PC-3 (cell line): ENCODE measurements at regions of chr13 and their contacts with region 1.

Region 1: GRCh38 chr13:80979035-80979641 is 638.2 kb upstream of the SPRY2 start:
- DNase-seq: peak; percentile 67
- ATAC-seq: peak; percentile 68
- H3K4me3 ChIP-seq: no peak overlapping the region
- H3K27ac ChIP-seq: no peak overlapping the region
- H3K4me1 ChIP-seq: no peaks in the 10 kb centered on the region
- H3K27me3 ChIP-seq: no peaks in the 10 kb centered on the region
- CTCF ChIP-seq: peak; percentile 84

Region 2: DNA sequence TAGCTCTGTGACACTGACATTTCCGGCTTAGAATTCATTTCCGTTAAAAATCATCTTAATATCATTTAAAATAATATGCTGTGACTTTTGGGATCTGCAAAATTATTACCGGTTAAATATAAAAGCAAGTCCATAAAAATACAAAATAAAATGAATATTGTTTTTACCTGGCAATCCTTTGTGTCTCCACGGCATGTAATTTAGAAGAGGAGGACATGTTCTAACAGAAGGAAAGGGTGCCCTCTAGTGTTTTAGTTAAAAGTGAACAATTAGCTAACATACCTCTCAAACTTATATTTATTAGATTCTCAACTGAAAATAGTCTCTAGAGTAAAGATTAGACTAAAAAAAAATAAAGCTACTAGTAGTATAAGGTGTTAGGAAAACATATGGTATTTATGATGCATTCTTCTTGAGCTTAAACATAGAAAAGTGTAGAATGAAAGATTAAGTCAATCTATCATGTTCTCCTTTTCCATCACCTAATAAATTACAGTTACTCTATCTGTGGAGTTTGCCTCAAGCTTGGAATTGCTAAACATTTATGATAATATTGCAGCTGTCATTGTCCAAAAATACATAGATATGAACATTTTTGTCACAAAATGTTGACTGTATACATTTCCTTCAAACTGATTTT is 38.5 kb after region 1 on chr13:
- CTCF ChIA-PET with region 1: interaction called, 4 read pairs
- POLR2A ChIA-PET with region 1: no interaction called
- intact Hi-C with region 1: loop called (anchors 1 kb)
- DNase-seq: peak; percentile 61
- ATAC-seq: peak; percentile 55
- H3K4me3 ChIP-seq: no peak overlapping the region
- H3K27ac ChIP-seq: no peak overlapping the region
- H3K4me1 ChIP-seq: no peaks in the 10 kb centered on the region
- H3K27me3 ChIP-seq: no peaks in the 10 kb centered on the region
- CTCF ChIP-seq: peak; percentile 67

Region 3: DNA sequence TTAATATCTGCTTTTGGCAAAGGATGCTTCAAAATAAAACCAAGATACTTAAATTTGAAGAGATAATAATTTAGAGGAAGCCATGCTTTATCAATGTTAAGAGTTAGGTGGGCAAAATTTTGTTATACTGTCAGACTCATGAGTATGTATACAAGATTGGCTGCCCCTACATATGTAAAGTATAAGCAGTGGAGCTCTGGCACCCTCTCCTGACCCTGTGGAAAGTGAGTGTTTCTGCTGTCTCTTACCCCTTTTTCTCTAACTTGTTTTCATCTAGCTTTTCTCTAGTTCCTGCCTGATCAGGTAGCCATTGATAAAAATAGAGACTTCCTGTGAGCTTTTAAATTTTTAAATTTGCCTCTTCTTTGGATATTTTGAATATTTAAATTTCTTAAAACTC is 72.7 kb after region 1 on chr13:
- CTCF ChIA-PET with region 1: no interaction called
- POLR2A ChIA-PET with region 1: no interaction called
- intact Hi-C with region 1: loop called (anchors 10 kb)
- DNase-seq: peak; percentile 7
- ATAC-seq: peak; percentile 43
- H3K4me3 ChIP-seq: no peak overlapping the region
- H3K27ac ChIP-seq: no peak overlapping the region
- H3K4me1 ChIP-seq: no peaks in the 10 kb centered on the region
- H3K27me3 ChIP-seq: no peaks in the 10 kb centered on the region
- CTCF ChIP-seq: peak; percentile 36; the same call in 1 of the 2 replicates